Left ventricle myocardium superior (tissue), 1 donor: ENCODE measurements at regions of chr7 and their contacts with region 1.

Region 1: GRCh38 chr7:112550468-112551060 is 69.8 kb downstream of the LSMEM1 start:
- DNase-seq: no peak
- ATAC-seq: peak; percentile 60

Region 2: DNA sequence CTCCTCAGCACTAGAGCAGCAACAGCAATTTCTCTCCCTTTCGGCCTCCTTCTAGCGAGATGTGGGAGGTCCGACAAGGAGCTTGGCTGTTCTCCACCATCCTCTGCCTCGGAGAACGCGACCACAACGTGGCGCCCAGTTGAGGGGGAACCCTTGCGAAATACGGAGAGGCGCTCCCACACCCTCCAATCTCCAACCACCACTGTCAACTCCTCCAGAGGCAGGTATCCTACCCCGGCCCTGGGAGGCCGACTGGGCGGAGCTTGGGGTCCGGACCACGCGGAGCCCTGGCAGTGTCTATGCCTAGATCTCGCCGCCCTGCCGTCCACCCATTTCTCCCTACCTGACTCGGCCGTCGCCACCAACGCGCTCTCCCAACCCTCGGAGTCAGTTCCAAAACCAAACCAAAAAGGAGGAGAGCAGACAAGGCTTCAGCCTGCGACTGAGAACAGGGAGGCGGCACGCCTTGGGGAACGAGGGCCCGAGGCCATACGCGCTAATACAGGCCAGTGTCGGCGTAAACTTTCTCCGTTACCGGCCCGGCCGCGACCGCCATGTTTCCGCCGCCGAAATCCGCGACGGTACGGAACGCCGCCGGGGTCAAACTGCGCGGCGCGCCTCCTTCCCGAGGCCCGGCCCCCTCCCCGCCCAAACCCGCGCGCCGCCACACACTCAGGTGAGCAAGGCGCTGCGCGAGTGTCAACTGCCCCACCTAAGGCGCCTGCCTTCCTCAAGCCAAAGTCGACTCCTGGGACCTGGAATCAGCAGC is 239.4 kb after region 1 on chr7 and contains the start of gene TMEM168:
- intact Hi-C with region 1: no loop called
- DNase-seq: peak; percentile 90
- ATAC-seq: peak; percentile 95
- total RNA-seq, gene TMEM168: 14.4 TPM

Region 3: GRCh38 chr7:113421696-113422330 is 871.2 kb after region 1 on chr7:
- intact Hi-C with region 1: loop called (anchors 10 kb)
- DNase-seq: peak; percentile 69
- ATAC-seq: peak; percentile 81